HepG2 (cell line): ENCODE measurements at regions of chr11 and their contacts with region 1.

Region 1: GRCh38 chr11:55838452-55838851 is at the start of gene OR5D16:
- DNase-seq: no peak
- ATAC-seq: no peak
- H3K4me3 ChIP-seq: no peak within 1 kb of the TSS
- H3K27ac ChIP-seq: no peak within 1 kb of the TSS
- H3K4me1 ChIP-seq: no peaks in the 10 kb centered on the region
- H3K27me3 ChIP-seq: no peaks in the 10 kb centered on the region
- CTCF ChIP-seq: no peak
- EP300 ChIP-seq: no peak
- POLR2A ChIP-seq: no peak
- RAD21 ChIP-seq: no peak
- total RNA-seq, gene OR5D16: not detected in 2 replicates

Region 2: GRCh38 chr11:55793321-55793720 is 45.1 kb before region 1 on chr11:
- CTCF ChIA-PET with region 1: no interaction called
- POLR2A ChIA-PET with region 1: no interaction called
- in situ Hi-C with region 1: loop called (anchors 10 kb)
- intact Hi-C with region 1: no loop called
- DNase-seq: no peak
- ATAC-seq: no peak
- H3K4me3 ChIP-seq: no peak overlapping the region
- H3K27ac ChIP-seq: no peak overlapping the region
- H3K4me1 ChIP-seq: no peaks in the 10 kb centered on the region
- H3K27me3 ChIP-seq: no peaks in the 10 kb centered on the region
- CTCF ChIP-seq: no peak
- EP300 ChIP-seq: no peak
- POLR2A ChIP-seq: no peak
- RAD21 ChIP-seq: no peak